CD4-positive, alpha-beta T cell (primary cell): ENCODE measurements at regions of chr3 and their contacts with region 1.

Region 1: DNA sequence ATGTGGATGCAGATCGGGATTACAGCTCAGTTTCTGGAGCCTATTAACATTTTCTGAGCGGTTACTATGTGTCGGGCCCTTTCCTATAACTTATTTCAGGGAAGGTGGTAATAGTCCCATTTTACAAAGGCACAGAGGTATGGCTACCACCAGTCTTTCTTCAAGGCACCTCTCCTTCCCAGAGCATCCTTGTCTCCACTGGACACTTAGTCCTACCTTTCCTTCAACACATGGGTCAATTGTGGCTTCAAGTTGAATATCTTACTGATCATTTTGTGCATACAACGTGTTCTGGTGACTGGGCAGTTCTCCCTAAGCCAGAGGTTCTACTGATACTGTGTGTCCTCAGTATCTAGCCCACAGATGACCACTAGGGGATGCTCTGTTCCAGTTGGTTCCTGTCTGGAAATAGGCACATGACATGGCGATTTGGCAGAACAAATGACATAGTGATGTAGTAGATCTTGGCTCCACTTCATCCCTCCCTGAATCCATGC is 60.7 kb upstream of the CMTM8 start:
- DNase-seq: peak in 12 of 14 experiments; percentile 12 to 77 (median 34)
- ATAC-seq: peak; percentile 65
- H3K4me3 ChIP-seq: no peak overlapping the region
- H3K4me3 Mint-ChIP-seq: no peak overlapping the region
- H3K27ac ChIP-seq: no peak overlapping the region
- H3K27ac Mint-ChIP-seq: no peak overlapping the region
- H3K4me1 ChIP-seq: peaks cover 9% of the 10 kb centered on the region
- H3K4me1 Mint-ChIP-seq: peaks cover 12% of the 10 kb centered on the region
- H3K27me3 ChIP-seq: peaks cover 0 to under 1% of the 10 kb centered on the region in 2 experiments
- H3K27me3 Mint-ChIP-seq: no peaks in the 10 kb centered on the region
- CTCF ChIP-seq: peak; percentile 33

Region 2: DNA sequence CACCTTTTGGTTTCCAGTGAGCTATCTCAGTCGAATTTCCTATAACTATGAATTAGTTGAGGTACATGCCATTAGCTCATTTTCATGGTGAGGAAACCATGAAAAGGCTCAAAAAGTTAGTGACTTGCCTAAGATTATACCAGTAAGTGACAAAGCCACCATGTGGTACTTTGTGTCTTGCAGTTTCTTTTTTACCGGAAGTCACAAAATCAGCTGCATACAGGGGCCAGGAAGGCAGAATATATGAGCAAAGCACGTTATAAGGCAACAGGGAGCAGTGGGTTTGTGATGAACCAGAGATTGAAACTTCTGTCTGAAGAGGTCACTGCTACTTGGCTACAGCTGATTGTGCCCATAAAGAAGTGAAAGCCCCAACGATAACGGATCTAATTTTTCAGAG is 111.1 kb after region 1 on chr3:
- CTCF ChIA-PET with region 1: interaction called, 8 read pairs
- POLR2A ChIA-PET with region 1: no interaction called
- intact Hi-C with region 1: loop called in 1 of 2 experiments (anchors 2 kb)
- DNase-seq: peak in 6 of 14 experiments; percentile 12 to 73 (median 48)
- ATAC-seq: peak; percentile 83
- H3K4me3 ChIP-seq: no peak overlapping the region
- H3K4me3 Mint-ChIP-seq: peak overlapping the region; percentile 3
- H3K27ac ChIP-seq: no peak overlapping the region
- H3K27ac Mint-ChIP-seq: peak overlapping the region; percentile 79
- H3K4me1 ChIP-seq: peaks cover 37% of the 10 kb centered on the region
- H3K4me1 Mint-ChIP-seq: peaks cover 50% of the 10 kb centered on the region
- H3K27me3 ChIP-seq: no peaks in the 10 kb centered on the region
- H3K27me3 Mint-ChIP-seq: no peaks in the 10 kb centered on the region
- CTCF ChIP-seq: peak; percentile 19

Region 3: GRCh38 chr3:32296256-32297204 is 118.8 kb after region 1 on chr3:
- CTCF ChIA-PET with region 1: interaction called, 6 read pairs
- POLR2A ChIA-PET with region 1: no interaction called
- intact Hi-C with region 1: loop called (anchors 2 kb)
- DNase-seq: peak; percentile 52 to 88 (median 60)
- ATAC-seq: peak; percentile 62
- H3K4me3 ChIP-seq: no peak overlapping the region
- H3K4me3 Mint-ChIP-seq: peak overlapping the region; percentile 76
- H3K27ac ChIP-seq: peak overlapping the region; percentile 60
- H3K27ac Mint-ChIP-seq: peak overlapping the region; percentile 93
- H3K4me1 ChIP-seq: peaks cover 44% of the 10 kb centered on the region
- H3K4me1 Mint-ChIP-seq: peaks cover 43% of the 10 kb centered on the region
- H3K27me3 ChIP-seq: no peaks in the 10 kb centered on the region
- H3K27me3 Mint-ChIP-seq: no peaks in the 10 kb centered on the region
- CTCF ChIP-seq: peak; percentile 93

Region 4: DNA sequence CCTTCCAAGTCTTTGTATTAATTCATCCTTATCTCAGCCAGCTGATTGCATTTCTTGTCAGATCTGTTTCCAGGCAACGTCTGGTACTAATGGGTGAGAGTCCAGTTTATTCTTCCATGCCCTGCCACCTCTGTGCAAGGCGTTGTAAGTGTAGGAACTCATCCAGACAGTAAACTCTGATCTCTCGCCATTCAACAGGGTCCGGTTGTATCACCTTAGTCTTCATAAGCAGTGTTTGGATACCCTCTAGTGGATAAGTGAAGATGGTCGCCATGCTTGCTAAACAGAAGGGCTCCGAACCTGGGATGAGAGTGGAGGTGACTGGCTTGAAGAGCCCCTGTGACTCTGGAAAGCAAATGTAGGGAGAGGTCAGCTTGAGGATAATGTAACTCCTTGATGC is 162.3 kb after region 1 on chr3:
- CTCF ChIA-PET with region 1: interaction called, 6 read pairs
- POLR2A ChIA-PET with region 1: interaction called, 8 read pairs
- intact Hi-C with region 1: loop called (anchors 1 kb)
- DNase-seq: peak in 9 of 14 experiments; percentile 12 to 74 (median 28)
- ATAC-seq: peak; percentile 80
- H3K4me3 ChIP-seq: no peak overlapping the region
- H3K4me3 Mint-ChIP-seq: no peak overlapping the region
- H3K27ac ChIP-seq: no peak overlapping the region
- H3K27ac Mint-ChIP-seq: no peak overlapping the region
- H3K4me1 ChIP-seq: peaks cover 26% of the 10 kb centered on the region
- H3K4me1 Mint-ChIP-seq: peaks cover 35% of the 10 kb centered on the region
- H3K27me3 ChIP-seq: no peaks in the 10 kb centered on the region
- H3K27me3 Mint-ChIP-seq: no peaks in the 10 kb centered on the region
- CTCF ChIP-seq: peak; percentile 64

Region 5: DNA sequence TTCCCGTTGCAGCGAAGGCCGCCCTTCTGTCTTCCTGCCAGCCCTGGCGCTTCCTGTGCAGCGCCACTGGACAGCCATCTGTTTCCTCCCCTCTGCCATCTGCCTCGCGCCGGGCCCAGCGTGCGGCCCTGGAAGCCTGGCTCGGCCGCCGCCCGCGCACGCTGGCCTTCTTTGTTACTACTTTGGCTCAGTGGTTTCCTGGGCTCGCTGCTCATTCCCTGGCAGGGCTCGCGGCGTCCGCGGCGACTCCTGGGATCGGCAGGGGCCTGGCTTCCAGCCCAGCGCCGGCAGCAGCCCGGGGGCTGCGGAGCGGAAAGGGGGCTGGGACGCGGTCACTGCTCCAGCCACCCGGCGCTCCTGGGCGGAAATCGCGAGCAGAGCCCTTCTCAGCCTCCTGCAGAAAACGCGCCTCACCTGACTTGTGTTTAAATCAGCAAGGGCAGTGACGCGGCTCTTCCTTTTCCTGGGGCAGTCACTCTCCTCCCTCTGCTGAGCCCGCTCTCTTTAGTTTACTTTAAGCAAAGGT is 223.9 kb after region 1 on chr3:
- CTCF ChIA-PET with region 1: interaction called, 5 read pairs
- POLR2A ChIA-PET with region 1: no interaction called
- intact Hi-C with region 1: loop called (anchors 1 to 2 kb)
- DNase-seq: peak; percentile 37 to 84 (median 58)
- ATAC-seq: peak; percentile 73
- H3K4me3 ChIP-seq: peak overlapping the region; percentile 65
- H3K4me3 Mint-ChIP-seq: peak overlapping the region; percentile 92
- H3K27ac ChIP-seq: peak overlapping the region; percentile 85 to 92
- H3K27ac Mint-ChIP-seq: peak overlapping the region; percentile 90
- H3K4me1 ChIP-seq: peaks cover 62% of the 10 kb centered on the region
- H3K4me1 Mint-ChIP-seq: peaks cover 77% of the 10 kb centered on the region
- H3K27me3 ChIP-seq: no peaks in the 10 kb centered on the region
- H3K27me3 Mint-ChIP-seq: no peaks in the 10 kb centered on the region
- CTCF ChIP-seq: no peak

Region 6: DNA sequence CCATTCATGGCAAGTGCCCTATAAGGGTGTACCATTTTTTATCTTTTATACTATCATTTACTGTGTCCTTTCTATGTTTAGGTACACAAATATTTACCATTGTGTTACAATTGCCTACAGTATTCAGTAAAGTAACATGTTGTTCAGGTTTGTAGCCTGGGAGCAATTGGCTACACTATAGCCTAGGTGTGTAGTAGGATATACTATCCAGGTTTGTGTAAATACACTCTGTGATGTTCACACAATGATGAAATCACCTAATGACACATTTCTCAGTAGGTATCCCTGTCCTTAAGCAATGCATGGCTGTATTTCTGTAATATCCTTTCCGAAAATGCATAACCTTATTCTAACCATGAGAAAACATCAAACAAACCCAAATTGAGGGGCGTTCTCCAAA is 489.4 kb after region 1 on chr3:
- CTCF ChIA-PET with region 1: no interaction called
- POLR2A ChIA-PET with region 1: no interaction called
- intact Hi-C with region 1: loop called (anchors 2 to 5 kb)
- DNase-seq: no peak
- ATAC-seq: no peak
- H3K4me3 ChIP-seq: no peak overlapping the region
- H3K4me3 Mint-ChIP-seq: no peak overlapping the region
- H3K27ac ChIP-seq: no peak overlapping the region
- H3K27ac Mint-ChIP-seq: no peak overlapping the region
- H3K4me1 ChIP-seq: no peaks in the 10 kb centered on the region
- H3K4me1 Mint-ChIP-seq: no peaks in the 10 kb centered on the region
- H3K27me3 ChIP-seq: no peaks in the 10 kb centered on the region
- H3K27me3 Mint-ChIP-seq: peaks cover 3% of the 10 kb centered on the region
- CTCF ChIP-seq: no peak